Mammary epithelial cell (primary cell): ENCODE measurements at regions of chr21 and their contacts with region 1.

Region 1: GRCh38 chr21:33682992-33683627 is 40.8 kb downstream of the ITSN1 start:
- DNase-seq: peak; percentile 93
- H3K4me3 ChIP-seq: peak overlapping the region in 1 of 3 experiments; percentile 9
- H3K27ac ChIP-seq: peak overlapping the region; percentile 77
- H3K4me1 ChIP-seq: peaks cover 44% of the 10 kb centered on the region
- H3K27me3 ChIP-seq: no peaks in the 10 kb centered on the region
- CTCF ChIP-seq: no peak

Region 2: GRCh38 chr21:33636712-33637111 is 46.4 kb before region 1 on chr21:
- CTCF ChIA-PET with region 1: no interaction called
- dilution Hi-C with region 1: no loop called
- in situ Hi-C with region 1: no loop called
- intact Hi-C with region 1: no loop called
- DNase-seq: no peak
- H3K4me3 ChIP-seq: no peak overlapping the region
- H3K27ac ChIP-seq: no peak overlapping the region
- H3K4me1 ChIP-seq: peaks cover 4% of the 10 kb centered on the region
- H3K27me3 ChIP-seq: no peaks in the 10 kb centered on the region
- CTCF ChIP-seq: no peak

Region 3: DNA sequence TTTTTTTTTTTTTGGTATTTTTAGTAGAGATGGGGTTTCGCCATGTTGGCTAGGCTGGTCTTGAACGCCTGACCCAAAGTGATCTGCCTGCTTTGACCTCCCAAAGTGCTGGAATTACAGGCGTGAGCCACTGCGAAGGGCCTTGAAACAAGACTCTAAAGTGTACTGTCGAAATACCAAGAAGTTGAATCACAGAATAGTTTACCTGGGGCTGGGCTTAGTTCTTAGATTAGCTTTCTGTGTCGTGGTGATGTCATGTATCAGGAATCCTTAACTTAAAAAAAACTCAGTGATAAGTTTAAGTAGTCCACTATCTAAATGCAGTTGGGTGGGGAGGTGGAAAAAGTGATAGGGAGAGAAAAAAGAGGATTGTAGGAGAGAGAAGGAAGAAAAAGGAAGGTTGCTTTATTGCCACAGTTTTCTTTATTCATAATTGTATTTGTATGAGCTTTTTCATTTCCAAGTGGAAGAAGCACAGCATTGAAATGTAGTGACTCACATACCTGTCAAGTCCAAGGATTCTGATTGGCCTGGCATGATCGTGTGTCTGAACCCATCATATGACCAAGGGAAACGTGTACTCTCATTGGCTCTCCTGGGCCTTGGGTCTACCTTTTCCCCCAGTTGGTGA is 27.4 kb before region 1 on chr21:
- CTCF ChIA-PET with region 1: no interaction called
- dilution Hi-C with region 1: no loop called
- in situ Hi-C with region 1: no loop called
- intact Hi-C with region 1: loop called (anchors 1 kb)
- DNase-seq: peak; percentile 89
- H3K4me3 ChIP-seq: peak overlapping the region in 1 of 3 experiments; percentile 18
- H3K27ac ChIP-seq: peak overlapping the region; percentile 75
- H3K4me1 ChIP-seq: peaks cover 22% of the 10 kb centered on the region
- H3K27me3 ChIP-seq: no peaks in the 10 kb centered on the region
- CTCF ChIP-seq: no peak

Region 4: DNA sequence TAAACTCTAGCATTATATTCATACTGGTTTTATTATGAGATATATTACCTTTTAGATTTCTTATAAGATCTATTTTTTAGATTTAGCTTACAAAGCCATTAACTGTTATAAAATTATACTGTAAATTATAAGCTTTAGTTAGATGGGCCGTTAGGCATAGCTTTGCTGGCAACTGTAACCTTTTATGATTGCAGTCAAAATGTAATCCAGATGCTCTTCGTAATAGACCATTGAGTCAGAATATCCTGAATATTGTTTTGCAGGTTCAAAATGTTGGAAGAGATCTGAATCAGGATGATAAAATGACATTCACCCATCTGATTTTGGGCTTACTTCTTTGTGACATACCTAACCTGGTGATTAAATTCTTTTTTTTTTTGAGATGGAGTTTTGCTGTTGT is 19.9 kb before region 1 on chr21:
- CTCF ChIA-PET with region 1: no interaction called
- dilution Hi-C with region 1: no loop called
- in situ Hi-C with region 1: no loop called
- intact Hi-C with region 1: loop called (anchors 2 kb)
- DNase-seq: no peak
- H3K4me3 ChIP-seq: no peak overlapping the region
- H3K27ac ChIP-seq: no peak overlapping the region
- H3K4me1 ChIP-seq: peaks cover 2% of the 10 kb centered on the region
- H3K27me3 ChIP-seq: no peaks in the 10 kb centered on the region
- CTCF ChIP-seq: no peak

Region 5: DNA sequence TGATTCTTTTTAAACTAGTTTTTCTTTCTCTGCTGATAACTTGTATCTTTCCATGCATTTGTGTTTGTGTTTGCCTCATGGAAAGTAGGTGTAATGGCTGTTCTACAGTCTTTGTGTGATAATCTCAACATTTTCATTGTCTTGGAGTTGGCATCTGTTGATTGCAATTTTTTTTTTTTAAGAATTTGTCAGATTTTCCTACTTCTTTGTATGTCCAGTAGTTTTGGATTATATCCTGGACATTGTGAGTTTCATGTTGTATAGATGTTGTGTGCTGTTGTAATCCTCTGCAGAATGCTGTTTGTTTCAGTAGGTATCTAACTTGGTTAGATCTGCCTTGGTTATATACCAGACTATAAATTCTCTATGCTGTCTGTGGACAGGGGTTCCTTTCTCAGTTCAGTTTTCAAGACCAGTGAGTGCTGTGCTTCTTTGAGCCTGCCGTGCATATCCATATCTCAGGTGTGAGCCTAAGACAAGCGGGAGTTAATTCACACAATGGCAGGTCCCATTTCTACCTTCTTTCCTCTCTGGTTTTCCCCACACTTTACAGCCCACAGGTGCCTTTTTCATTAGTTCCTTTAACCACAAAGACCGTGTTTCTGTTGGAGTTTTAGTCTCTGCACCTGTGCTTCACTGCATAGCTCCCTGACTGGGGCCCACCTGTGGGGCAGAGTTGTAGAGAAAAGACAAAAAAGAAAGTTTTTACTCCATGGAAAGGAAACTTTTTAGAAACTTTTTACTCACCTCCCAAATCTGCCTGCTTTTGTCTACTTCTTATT is 29.1 kb after region 1 on chr21:
- CTCF ChIA-PET with region 1: no interaction called
- dilution Hi-C with region 1: no loop called
- in situ Hi-C with region 1: no loop called
- intact Hi-C with region 1: loop called (anchors 2 kb)
- DNase-seq: no peak
- H3K4me3 ChIP-seq: no peak overlapping the region
- H3K27ac ChIP-seq: no peak overlapping the region
- H3K4me1 ChIP-seq: peaks cover 6% of the 10 kb centered on the region
- H3K27me3 ChIP-seq: no peaks in the 10 kb centered on the region
- CTCF ChIP-seq: no peak